Ovary (tissue), 10 donors: ENCODE measurements at regions of chr11 and their contacts with region 1.

Region 1: GRCh38 chr11:95849087-95849825 is 59.0 kb downstream of the CEP57 start:
- DNase-seq: peak in 4 of 5 donors; percentile 18 to 61 (median 36)
- H3K4me3 ChIP-seq: no peak overlapping the region
- H3K27ac ChIP-seq: no peak overlapping the region
- H3K4me1 ChIP-seq: no peaks in the 10 kb centered on the region
- H3K27me3 ChIP-seq: no peaks in the 10 kb centered on the region
- CTCF ChIP-seq: peak in 2 of 3 donors; percentile 34 to 38
- EP300 ChIP-seq: no peak
- POLR2A ChIP-seq: no peak

Region 2: DNA sequence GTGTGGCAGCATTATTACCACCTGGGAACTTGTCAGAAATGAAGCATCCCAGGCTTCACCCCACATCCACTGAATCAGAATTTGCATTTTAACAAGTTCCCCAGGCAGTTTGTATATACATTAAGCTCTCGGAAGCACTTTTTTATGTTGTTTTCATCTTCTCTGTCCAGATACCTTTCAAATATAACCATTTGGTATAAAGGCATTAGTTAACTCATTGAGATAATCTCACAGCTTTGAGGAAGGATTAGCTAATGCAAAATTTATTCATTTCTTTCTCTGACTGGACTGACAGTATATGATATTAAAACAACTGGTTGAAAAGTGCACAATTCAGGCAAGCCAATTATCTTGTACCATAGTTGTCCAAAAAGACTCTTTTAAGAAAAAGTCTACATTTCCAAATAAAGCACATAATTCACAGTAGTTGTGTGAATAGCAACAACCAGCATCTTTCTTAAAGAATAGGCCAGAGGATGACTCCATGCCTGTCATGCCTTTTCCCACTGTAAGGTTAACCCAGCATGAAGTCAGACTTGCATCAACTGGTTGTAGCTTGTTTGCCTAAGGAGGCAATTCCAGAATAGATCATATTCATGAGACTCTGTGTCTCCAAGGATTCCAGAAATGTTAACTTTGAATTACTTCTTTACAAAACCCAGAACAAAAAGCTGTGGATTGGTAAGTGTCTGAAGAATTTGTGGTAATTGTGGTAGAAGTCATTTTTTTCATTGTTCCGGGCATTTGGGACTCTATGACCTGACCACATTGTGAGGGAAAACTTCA is 363.9 kb before region 1 on chr11:
- intact Hi-C with region 1: no loop called
- DNase-seq: no peak
- H3K4me3 ChIP-seq: no peak overlapping the region
- H3K27ac ChIP-seq: no peak overlapping the region
- H3K4me1 ChIP-seq: no peaks in the 10 kb centered on the region
- H3K27me3 ChIP-seq: no peaks in the 10 kb centered on the region
- CTCF ChIP-seq: no peak
- EP300 ChIP-seq: no peak
- POLR2A ChIP-seq: no peak

Region 3: DNA sequence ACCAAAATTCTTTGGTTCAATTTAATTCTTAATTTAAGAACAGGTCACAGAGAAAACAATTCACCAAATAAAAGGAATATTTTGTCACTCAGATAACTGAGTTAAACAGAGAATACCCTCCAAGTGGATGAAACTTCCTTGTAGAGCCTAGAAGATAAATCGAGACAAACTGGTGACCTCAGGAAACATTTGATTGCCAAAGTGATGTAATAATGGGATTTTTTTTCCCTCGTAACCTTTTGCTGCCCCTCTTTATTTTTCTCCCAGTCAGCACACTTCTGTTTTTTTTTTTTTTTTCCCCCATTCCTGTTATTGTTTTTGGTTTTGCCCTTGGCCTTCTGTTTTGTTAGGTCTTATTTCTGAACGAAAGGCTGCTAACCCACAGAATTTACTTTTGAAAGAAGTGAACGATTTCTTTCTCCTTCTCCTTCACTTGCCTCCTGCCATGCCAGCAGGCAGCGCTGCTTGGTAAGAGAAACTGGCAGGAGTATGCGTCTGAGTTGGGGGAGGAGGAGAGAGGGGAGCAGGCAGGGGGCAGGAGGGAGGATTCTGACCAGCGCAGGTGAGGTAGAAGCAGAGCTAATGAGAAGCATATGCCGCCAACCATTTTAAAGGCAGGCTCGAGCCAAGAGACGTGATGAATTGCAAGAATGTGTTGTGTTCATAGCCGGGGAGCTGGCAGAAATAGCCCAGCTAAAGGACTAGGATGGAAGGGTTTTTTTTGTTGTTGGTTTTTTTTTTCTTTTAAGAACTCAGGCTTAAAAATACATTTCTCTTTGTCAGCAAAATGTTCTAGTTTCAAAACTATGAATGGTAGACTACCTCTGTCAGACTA is 196.6 kb after region 1 on chr11:
- intact Hi-C with region 1: loop called in 1 of 4 experiments (anchors 10 kb)
- DNase-seq: peak; percentile 63 to 69 (median 66)
- H3K4me3 ChIP-seq: peak overlapping the region; percentile 25
- H3K27ac ChIP-seq: peak overlapping the region; percentile 49 to 80
- H3K4me1 ChIP-seq: peaks cover 13% of the 10 kb centered on the region
- H3K27me3 ChIP-seq: no peaks in the 10 kb centered on the region
- CTCF ChIP-seq: peak in 2 of 3 donors; percentile 29 to 32
- EP300 ChIP-seq: no peak
- POLR2A ChIP-seq: no peak

Region 4: GRCh38 chr11:96254087-96254486 is 404.8 kb after region 1 on chr11:
- intact Hi-C with region 1: no loop called
- DNase-seq: no peak
- H3K4me3 ChIP-seq: no peak overlapping the region
- H3K27ac ChIP-seq: no peak overlapping the region
- H3K4me1 ChIP-seq: peaks cover 9% of the 10 kb centered on the region
- H3K27me3 ChIP-seq: no peaks in the 10 kb centered on the region
- CTCF ChIP-seq: no peak
- EP300 ChIP-seq: no peak
- POLR2A ChIP-seq: no peak

Region 5: DNA sequence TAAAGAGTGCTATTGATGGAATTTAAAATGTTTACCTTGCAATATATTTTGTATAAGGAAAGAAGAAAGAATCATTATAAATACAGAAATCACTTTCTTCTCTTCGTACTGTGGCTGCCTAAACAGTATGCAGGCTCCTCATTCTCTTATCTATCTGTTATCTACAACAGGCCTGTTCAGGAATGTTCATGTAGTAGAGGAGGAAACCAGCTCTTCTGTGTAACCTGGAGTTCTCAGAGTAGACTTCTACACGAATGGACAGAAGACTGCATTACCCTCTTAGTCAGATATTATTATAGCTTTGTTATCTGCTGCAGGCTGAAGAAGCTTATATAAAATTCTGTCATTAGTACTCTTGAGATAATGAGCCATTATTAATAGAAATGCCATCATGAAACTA is 1945.6 kb after region 1 on chr11:
- intact Hi-C with region 1: no loop called
- DNase-seq: no peak
- H3K4me3 ChIP-seq: no peak overlapping the region
- H3K27ac ChIP-seq: no peak overlapping the region
- H3K4me1 ChIP-seq: no peaks in the 10 kb centered on the region
- H3K27me3 ChIP-seq: no peaks in the 10 kb centered on the region
- CTCF ChIP-seq: no peak
- EP300 ChIP-seq: no peak
- POLR2A ChIP-seq: no peak